ENCODE measurements at regions of chr3 and their contacts with region 1.

Region 1: GRCh38 chr3:50245831-50246516 is 10.0 kb downstream of the GNAI2 start:
- DNase-seq: peak; percentile 34
- H3K4me3 ChIP-seq: peak overlapping the region; percentile 51
- CTCF ChIP-seq: peak; percentile 99

Region 2: GRCh38 chr3:50227390-50228183 is 18.4 kb before region 1 on chr3:
- CTCF ChIA-PET with region 1: interaction called, 1,609 read pairs
- POLR2A ChIA-PET with region 1: interaction called, 3 read pairs
- DNase-seq: no peak
- H3K4me3 ChIP-seq: peak overlapping the region; percentile 80
- CTCF ChIP-seq: peak; percentile 78

Region 3: DNA sequence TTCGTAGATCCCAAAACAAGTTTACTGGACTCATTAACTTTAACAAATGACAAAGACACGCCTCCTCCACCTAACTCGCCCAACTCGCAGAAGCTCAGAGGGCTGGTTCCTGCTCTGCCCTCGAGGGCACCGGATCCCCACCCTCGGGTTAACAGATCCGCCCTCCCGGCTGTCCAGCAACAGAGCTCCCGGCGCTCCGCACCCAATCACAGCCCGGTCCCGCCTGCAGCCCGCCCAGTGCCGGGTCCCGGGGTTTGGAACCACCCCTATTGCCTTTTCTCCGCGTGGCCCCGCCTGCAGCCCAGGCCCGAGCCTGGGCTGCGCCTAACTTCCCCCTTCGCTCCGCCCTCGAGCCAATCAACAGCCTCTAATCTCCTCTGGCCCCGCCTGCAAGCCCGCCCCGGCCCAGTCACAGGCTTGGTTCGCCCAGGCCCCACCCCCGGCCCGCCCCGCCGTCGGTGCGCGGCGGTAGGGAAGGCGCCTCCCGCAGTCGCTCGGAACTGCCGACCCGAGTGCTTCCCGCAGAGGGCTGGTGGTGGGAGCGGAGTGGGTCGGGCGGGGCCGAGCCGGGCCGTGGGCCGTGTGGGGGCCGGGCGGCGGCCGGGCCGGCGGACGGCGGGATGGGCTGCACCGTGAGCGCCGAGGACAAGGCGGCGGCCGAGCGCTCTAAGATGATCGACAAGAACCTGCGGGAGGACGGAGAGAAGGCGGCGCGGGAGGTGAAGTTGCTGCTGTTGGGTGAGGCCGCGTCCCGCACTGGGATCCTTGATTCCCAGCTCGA is 10.1 kb before region 1 on chr3 and contains the start of gene GNAI2:
- CTCF ChIA-PET with region 1: interaction called, 1,609 read pairs
- POLR2A ChIA-PET with region 1: interaction called, 25 read pairs
- DNase-seq: peak; percentile 82
- H3K4me3 ChIP-seq: peak within 1 kb of the TSS; percentile 83
- CTCF ChIP-seq: no peak

Region 4: GRCh38 chr3:50260027-50260941 is 14.3 kb after region 1 on chr3:
- CTCF ChIA-PET with region 1: interaction called, 1,609 read pairs
- POLR2A ChIA-PET with region 1: interaction called, 14 read pairs
- DNase-seq: no peak
- H3K4me3 ChIP-seq: peak overlapping the region; percentile 57
- CTCF ChIP-seq: peak; percentile 94

Region 5: GRCh38 chr3:50267280-50267913 is 21.4 kb after region 1 on chr3:
- CTCF ChIA-PET with region 1: interaction called, 1,609 read pairs
- POLR2A ChIA-PET with region 1: interaction called, 14 read pairs
- DNase-seq: no peak
- H3K4me3 ChIP-seq: peak overlapping the region; percentile 57
- CTCF ChIP-seq: no peak

Measured in AG04449 (cell line).